Posterior cingulate gyrus (tissue), 11 donors: ENCODE measurements at regions of chr3 and their contacts with region 1.

Region 1: GRCh38 chr3:184874709-184875644 is 63.0 kb downstream of the VPS8 start:
- DNase-seq: peak in 3 of 10 donors; percentile 6 to 21 (median 16)

Region 2: DNA sequence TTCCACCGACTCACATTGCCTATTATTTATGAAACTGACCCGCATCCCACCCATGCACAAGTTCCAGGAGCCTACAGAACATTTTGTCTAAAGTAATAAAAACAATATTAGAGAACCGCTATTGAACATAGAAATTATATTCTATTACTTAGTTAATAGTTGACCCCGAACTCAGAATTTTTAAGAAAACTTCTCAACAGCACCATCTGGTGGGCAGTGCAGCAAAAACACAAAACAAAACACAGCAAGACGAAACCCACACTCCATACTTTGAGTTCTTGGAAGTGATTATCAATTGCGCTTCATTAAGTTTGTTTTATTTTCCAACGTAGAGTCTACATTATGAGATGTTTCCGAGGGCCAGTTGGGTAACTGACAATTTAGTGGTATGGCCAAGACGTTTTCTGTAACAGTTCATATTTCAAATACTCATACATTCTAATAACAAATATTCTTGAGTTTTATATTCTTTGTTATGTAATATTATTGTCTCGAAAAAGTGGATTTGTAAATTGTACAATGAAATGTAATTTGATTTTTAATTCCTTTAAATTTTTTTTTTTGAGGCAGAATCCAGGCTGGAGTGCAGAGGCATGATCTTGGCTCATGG is 301.9 kb after region 1 on chr3:
- intact Hi-C with region 1: loop called (anchors 1 kb)
- DNase-seq: peak in 5 of 10 donors; percentile 14 to 63 (median 33)

Region 3: DNA sequence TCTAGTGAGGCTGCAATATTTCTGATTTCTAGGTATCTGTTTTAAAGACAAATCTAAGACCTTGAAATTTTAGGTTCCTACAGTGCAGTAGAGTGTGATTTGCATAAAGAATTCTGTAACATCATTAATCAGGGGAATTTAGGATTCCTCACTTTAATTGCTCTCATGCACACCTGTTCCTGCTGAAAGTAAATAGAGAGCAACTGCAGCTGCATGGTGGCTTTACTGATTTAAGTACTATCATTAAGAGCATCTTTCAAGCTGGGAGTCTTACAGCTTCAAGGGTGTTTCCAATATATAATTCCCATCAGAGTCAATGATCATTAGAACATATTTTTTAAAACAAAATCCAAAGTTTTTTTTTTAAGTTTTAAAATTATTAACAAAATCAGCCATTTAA is 313.8 kb after region 1 on chr3:
- intact Hi-C with region 1: no loop called
- DNase-seq: no peak

Region 4: DNA sequence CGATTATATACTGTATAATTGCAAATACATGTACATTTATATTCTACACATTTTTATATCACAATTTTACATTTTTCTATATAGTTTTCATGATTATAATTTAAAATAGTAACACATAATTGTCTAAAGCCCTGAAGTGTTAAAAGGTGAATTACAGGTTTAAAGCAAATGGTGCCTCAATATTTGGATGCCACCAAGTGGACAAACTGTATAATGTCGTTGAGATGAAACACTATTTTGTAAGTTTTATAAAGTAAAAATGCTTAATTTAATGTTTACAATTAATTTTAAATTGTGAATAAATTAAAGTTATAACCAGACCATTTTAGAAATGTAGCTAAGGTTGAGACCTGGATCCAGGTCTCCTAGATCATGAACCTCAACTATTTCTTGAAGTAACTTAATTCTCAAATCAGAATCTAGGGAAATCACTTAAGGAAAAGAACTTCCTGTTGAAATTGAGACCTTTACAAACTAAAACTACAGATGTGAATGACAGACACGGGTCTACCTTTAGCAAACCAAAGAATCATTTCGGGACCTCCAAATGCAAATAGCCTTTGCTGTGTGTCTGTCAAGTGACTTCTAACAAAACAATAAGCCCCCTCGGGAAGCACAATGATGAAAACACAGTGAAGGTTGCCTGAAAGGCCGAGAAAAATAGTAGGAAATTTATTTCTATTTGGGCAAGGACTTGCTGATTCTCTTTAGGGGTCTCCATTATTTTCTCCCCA is 341.1 kb after region 1 on chr3:
- intact Hi-C with region 1: loop called (anchors 10 kb)
- DNase-seq: no peak